Transverse colon (tissue), 4 donors: ENCODE measurements at regions of chr2 and their contacts with region 1.

Region 1: DNA sequence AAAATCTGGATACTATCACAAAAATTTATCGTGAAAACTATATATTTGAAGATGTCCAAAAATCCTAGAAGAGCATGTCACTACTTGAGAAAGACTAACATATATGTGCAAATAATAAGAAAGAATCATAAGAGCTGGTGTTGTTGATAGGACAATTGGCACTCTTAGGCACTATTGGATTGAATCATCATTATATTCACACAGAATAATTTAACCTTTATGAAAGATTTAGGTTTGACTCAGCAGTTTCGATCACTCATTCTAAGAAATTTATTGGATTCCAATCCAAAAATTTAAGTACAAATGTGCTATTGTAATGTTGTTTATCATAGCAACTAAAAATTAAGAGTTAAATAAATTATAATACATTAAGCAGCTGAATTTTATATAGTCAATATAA is 503.6 kb downstream of the SPAG16 start:
- DNase-seq: no peak
- H3K4me3 ChIP-seq: no peak overlapping the region
- H3K27ac ChIP-seq: no peak overlapping the region
- H3K4me1 ChIP-seq: no peaks in the 10 kb centered on the region
- H3K27me3 ChIP-seq: no peaks in the 10 kb centered on the region
- CTCF ChIP-seq: no peak
- EP300 ChIP-seq: no peak
- POLR2A ChIP-seq: no peak

Region 2: DNA sequence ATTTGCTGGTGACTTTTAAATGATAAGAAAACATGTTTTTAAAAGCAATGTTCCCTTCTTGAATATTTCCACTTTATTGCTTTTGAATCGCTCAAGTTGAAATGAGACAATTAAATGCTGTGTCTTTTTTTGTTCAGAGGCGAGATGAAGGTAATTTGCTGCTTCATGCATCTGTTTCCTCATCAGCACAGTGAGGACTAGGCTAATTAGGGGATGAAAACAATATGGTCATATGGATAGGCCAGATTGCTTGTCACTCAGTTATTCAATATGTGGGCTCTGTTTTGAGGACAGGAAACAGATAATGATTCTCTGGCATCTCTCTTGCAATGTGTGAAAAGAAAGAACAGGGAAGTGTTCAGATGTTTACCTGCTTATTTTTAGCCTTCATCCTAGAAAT is 1310.3 kb before region 1 on chr2:
- in situ Hi-C with region 1: no loop called
- intact Hi-C with region 1: no loop called
- DNase-seq: no peak
- H3K4me3 ChIP-seq: no peak overlapping the region
- H3K27ac ChIP-seq: no peak overlapping the region
- H3K4me1 ChIP-seq: no peaks in the 10 kb centered on the region
- H3K27me3 ChIP-seq: no peaks in the 10 kb centered on the region
- CTCF ChIP-seq: no peak
- EP300 ChIP-seq: no peak
- POLR2A ChIP-seq: no peak

Region 3: DNA sequence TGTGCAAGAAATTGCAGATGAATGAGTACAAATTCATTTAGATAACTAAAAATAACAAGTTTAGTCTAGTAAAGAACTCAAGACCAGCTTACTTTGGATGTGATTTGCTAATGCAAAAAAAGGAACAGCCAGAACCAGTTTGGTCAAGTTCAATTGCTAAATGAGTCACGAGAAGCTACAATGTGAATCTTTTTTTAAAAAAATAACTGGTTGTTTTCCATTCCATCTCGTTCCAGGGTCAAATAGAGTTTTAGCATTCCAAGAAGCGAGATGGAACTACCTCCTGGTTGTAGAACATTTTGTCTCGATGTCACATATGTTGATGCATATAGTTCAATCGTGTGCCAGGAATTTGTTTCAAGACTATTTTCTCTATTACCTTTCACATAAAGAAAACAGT is 571.4 kb before region 1 on chr2:
- in situ Hi-C with region 1: no loop called
- intact Hi-C with region 1: no loop called
- DNase-seq: no peak
- H3K4me3 ChIP-seq: no peak overlapping the region
- H3K27ac ChIP-seq: no peak overlapping the region
- H3K4me1 ChIP-seq: no peaks in the 10 kb centered on the region
- H3K27me3 ChIP-seq: no peaks in the 10 kb centered on the region
- CTCF ChIP-seq: no peak
- EP300 ChIP-seq: no peak
- POLR2A ChIP-seq: no peak

Region 4: GRCh38 chr2:213757525-213757924 is 30.3 kb before region 1 on chr2:
- in situ Hi-C with region 1: no loop called
- intact Hi-C with region 1: no loop called
- DNase-seq: no peak
- H3K4me3 ChIP-seq: no peak overlapping the region
- H3K27ac ChIP-seq: no peak overlapping the region
- H3K4me1 ChIP-seq: no peaks in the 10 kb centered on the region
- H3K27me3 ChIP-seq: no peaks in the 10 kb centered on the region
- CTCF ChIP-seq: no peak
- EP300 ChIP-seq: no peak
- POLR2A ChIP-seq: no peak

Region 5: DNA sequence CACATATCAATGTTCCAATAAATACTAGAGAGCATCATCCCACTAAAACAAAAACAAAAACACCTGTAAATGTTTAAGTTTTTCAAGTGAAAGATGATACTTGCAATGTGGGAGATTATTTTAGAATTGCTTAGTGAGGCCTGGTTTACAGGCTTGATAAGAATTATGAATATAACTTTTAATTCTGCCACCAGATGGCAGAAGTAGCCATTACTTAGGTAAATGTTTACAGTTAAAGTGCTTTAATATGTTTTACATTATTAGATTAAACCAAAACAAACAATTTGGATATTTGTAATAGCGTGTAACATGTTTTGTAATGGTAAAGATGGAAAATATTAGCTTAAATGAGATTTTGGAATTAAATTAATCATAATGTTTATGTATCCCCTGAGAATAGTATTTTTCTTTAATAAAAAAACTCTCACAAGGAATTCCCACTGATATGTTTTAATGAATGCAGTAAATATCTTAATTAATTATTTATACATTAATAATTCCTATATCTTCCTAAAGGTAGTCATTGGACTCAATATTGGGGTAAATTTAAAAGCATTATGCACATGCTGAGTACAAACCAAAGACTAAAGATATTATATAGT is 18.4 kb after region 1 on chr2:
- in situ Hi-C with region 1: no loop called
- intact Hi-C with region 1: loop called (anchors 1 kb)
- DNase-seq: no peak
- H3K4me3 ChIP-seq: no peak overlapping the region
- H3K27ac ChIP-seq: no peak overlapping the region
- H3K4me1 ChIP-seq: no peaks in the 10 kb centered on the region
- H3K27me3 ChIP-seq: no peaks in the 10 kb centered on the region
- CTCF ChIP-seq: peak in 3 of 5 experiments; percentile 17 to 25 (median 20)
- EP300 ChIP-seq: no peak
- POLR2A ChIP-seq: no peak

Region 6: DNA sequence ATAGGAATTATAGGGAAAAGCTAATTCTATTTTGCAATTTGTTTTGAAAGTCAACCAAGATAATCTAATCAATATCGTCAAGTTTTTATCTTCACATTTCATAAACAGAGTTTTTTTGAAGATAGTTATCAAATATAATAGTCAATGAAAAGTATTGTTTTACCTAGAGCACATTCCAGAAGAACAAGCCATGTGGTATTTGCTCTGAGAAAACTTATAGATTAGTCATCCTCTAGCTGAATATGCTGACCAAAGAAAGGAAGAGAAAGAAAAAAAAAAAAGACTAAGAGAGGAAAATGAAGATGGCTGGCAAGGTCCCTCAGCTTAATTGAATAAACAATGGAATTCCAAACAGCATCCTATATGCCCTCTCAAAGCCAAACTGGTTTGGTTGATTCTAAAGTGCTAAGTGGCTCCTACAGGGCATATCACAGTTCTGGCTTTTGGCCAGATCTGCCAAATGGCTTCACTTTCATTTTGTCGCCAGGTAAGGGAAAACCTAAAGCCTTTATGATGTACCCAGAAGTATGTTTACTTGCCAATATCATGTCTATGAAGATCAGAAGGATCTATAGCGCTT is 755.6 kb after region 1 on chr2:
- in situ Hi-C with region 1: no loop called
- intact Hi-C with region 1: no loop called
- DNase-seq: no peak
- H3K4me3 ChIP-seq: no peak overlapping the region
- H3K27ac ChIP-seq: no peak overlapping the region
- H3K4me1 ChIP-seq: no peaks in the 10 kb centered on the region
- H3K27me3 ChIP-seq: no peaks in the 10 kb centered on the region
- CTCF ChIP-seq: no peak
- EP300 ChIP-seq: no peak
- POLR2A ChIP-seq: no peak